Caco-2 (cell line): ENCODE measurements at regions of chr11 and their contacts with region 1.

Region 1: DNA sequence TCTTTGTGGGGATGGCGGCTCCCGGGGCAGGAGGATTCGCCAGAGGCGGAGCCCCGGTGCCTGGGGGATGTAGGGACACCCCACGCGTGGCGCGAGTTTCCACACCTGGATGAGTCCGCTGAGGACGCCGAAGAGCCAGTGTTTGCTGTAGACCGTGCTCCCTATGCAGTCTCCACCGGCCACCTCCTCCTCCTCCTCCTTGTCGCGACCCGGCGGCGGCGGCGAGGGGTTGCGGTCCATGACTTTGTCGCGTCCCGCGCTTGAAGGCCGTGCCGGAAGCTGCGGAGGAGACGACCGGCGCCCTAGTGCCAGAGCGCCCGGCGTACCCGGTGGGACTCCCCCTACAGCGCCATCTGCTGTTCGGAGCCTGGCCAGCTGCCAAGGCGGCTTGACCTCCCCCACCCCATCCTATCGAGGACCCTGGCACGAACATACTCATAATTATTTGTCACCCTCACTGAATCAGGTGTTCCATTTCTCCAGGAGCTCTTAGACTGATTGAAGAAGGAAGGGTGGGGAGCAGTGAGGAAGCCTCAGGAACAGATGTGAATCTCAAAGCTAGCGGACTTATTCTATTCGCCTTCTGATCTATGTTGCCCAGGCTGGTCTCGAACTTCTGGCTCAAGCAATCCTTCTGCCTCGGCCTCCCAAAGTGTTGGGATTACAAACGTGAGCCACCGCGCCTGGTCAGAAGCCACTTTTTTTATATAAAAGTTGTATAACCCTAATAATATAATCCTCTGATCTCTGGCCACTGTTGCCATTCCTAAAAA is at the start of gene SAAL1:
- DNase-seq: peak; percentile 89 to 94
- H3K4me3 ChIP-seq: peak within 1 kb of the TSS; percentile 61
- H3K4me3 Mint-ChIP-seq: peak within 1 kb of the TSS; percentile 91
- H3K27ac Mint-ChIP-seq: peak within 1 kb of the TSS; percentile 90
- H3K4me1 ChIP-seq: peaks cover 4% of the 10 kb centered on the region; the same call in 1 of the 2 replicates
- H3K4me1 Mint-ChIP-seq: peaks cover 6% of the 10 kb centered on the region
- H3K27me3 ChIP-seq: no peaks in the 10 kb centered on the region
- H3K27me3 Mint-ChIP-seq: peaks cover under 1% of the 10 kb centered on the region
- CTCF ChIP-seq: peak; percentile 93 to 97
- total RNA-seq, gene SAAL1: 38.9 and 43.1 TPM in 2 replicates

Region 2: GRCh38 chr11:17699147-17700114 is 406.6 kb before region 1 on chr11:
- CTCF ChIA-PET with region 1: no interaction called
- POLR2A ChIA-PET with region 1: no interaction called
- intact Hi-C with region 1: no loop called
- DNase-seq: no peak
- H3K4me3 ChIP-seq: no peak overlapping the region
- H3K4me3 Mint-ChIP-seq: no peak overlapping the region
- H3K27ac Mint-ChIP-seq: no peak overlapping the region
- H3K4me1 ChIP-seq: no peaks in the 10 kb centered on the region
- H3K4me1 Mint-ChIP-seq: no peaks in the 10 kb centered on the region
- H3K27me3 ChIP-seq: no peaks in the 10 kb centered on the region; the same call in 1 of the 2 replicates
- H3K27me3 Mint-ChIP-seq: peaks cover 9% of the 10 kb centered on the region
- CTCF ChIP-seq: no peak

Region 3: GRCh38 chr11:17991783-17992433 is 114.1 kb before region 1 on chr11:
- CTCF ChIA-PET with region 1: interaction called, 4 read pairs
- POLR2A ChIA-PET with region 1: no interaction called
- intact Hi-C with region 1: loop called (anchors 1 kb)
- DNase-seq: peak; percentile 69 to 76
- H3K4me3 ChIP-seq: no peak overlapping the region
- H3K4me3 Mint-ChIP-seq: no peak overlapping the region
- H3K27ac Mint-ChIP-seq: no peak overlapping the region
- H3K4me1 ChIP-seq: peaks cover 20% of the 10 kb centered on the region
- H3K4me1 Mint-ChIP-seq: peaks cover 16% of the 10 kb centered on the region
- H3K27me3 ChIP-seq: no peaks in the 10 kb centered on the region
- H3K27me3 Mint-ChIP-seq: no peaks in the 10 kb centered on the region
- CTCF ChIP-seq: peak; percentile 81 to 87

Region 4: GRCh38 chr11:18012863-18013781 is 92.9 kb before region 1 on chr11 and contains the start of gene SERGEF:
- CTCF ChIA-PET with region 1: interaction called, 6 read pairs
- POLR2A ChIA-PET with region 1: no interaction called
- intact Hi-C with region 1: loop called (anchors 1 kb)
- DNase-seq: peak; percentile 95 to 98
- H3K4me3 ChIP-seq: peak within 1 kb of the TSS; percentile 54
- H3K4me3 Mint-ChIP-seq: peak within 1 kb of the TSS; percentile 80
- H3K27ac Mint-ChIP-seq: peak within 1 kb of the TSS; percentile 14
- H3K4me1 ChIP-seq: 0 out of 2 replicates have a peak, but pooled peaks cover 9% of the 10 kb centered on the region
- H3K4me1 Mint-ChIP-seq: peaks cover 18% of the 10 kb centered on the region
- H3K27me3 ChIP-seq: no peaks in the 10 kb centered on the region
- H3K27me3 Mint-ChIP-seq: peaks cover 8% of the 10 kb centered on the region
- CTCF ChIP-seq: peak in 1 of 2 experiments; percentile 12
- total RNA-seq, gene SERGEF: 17.5 and 17.8 TPM in 2 replicates

Region 5: GRCh38 chr11:18280438-18281045 is 174.6 kb after region 1 on chr11:
- CTCF ChIA-PET with region 1: no interaction called
- POLR2A ChIA-PET with region 1: no interaction called
- intact Hi-C with region 1: no loop called
- DNase-seq: no peak
- H3K4me3 ChIP-seq: no peak overlapping the region
- H3K4me3 Mint-ChIP-seq: no peak overlapping the region
- H3K27ac Mint-ChIP-seq: no peak overlapping the region
- H3K4me1 ChIP-seq: no peaks in the 10 kb centered on the region
- H3K4me1 Mint-ChIP-seq: no peaks in the 10 kb centered on the region
- H3K27me3 ChIP-seq: no peaks in the 10 kb centered on the region
- H3K27me3 Mint-ChIP-seq: no peaks in the 10 kb centered on the region
- CTCF ChIP-seq: no peak